Breast epithelium (tissue), 4 donors: ENCODE measurements at regions of chr1 and their contacts with region 1.

Region 1: DNA sequence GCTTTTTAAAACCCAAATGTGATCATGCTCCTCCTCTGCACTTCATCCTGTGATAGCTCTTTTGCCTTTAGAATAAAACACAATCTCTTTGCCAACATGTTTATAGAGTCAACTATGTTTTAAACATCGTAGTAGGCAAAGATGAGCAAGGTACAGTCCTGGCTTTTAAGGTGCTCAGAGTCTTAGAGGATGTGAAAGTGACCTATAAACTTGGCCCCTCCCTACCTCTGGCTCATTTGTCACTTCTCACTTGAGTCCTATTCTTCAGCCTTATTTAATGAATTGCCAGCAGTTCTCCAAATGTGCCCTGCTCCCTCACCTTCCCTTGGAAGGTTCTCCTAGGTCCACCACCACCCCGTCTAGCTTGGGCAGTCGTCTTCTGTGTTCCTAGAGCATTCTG is 617.0 kb upstream of the NR5A2 start:
- DNase-seq: no peak
- H3K4me3 ChIP-seq: no peak overlapping the region
- H3K27ac ChIP-seq: no peak overlapping the region
- H3K4me1 ChIP-seq: no peaks in the 10 kb centered on the region
- H3K27me3 ChIP-seq: no peaks in the 10 kb centered on the region
- CTCF ChIP-seq: no peak
- POLR2A ChIP-seq: no peak

Region 2: GRCh38 chr1:199646761-199647160 is 236.3 kb after region 1 on chr1:
- intact Hi-C with region 1: loop called (anchors 5 kb)
- DNase-seq: no peak
- H3K4me3 ChIP-seq: no peak overlapping the region
- H3K27ac ChIP-seq: no peak overlapping the region
- H3K4me1 ChIP-seq: no peaks in the 10 kb centered on the region
- H3K27me3 ChIP-seq: no peaks in the 10 kb centered on the region
- CTCF ChIP-seq: no peak
- POLR2A ChIP-seq: no peak

Region 3: GRCh38 chr1:201023517-201023902 is 1613.0 kb after region 1 on chr1 and contains the start of gene KIF21B:
- intact Hi-C with region 1: no loop called
- DNase-seq: peak in 1 of 2 donors; percentile 56
- H3K4me3 ChIP-seq: peak within 1 kb of the TSS; percentile 48 to 84 (median 59)
- H3K27ac ChIP-seq: peak within 1 kb of the TSS in 1 of 2 donors; percentile 55
- H3K4me1 ChIP-seq: no peaks in the 10 kb centered on the region
- H3K27me3 ChIP-seq: no peaks in the 10 kb centered on the region
- CTCF ChIP-seq: no peak
- POLR2A ChIP-seq: no peak
- total RNA-seq, gene KIF21B: 0.96 to 2.6 (median 1.3) TPM